Calu3 (cell line): ENCODE measurements at regions of chr3 and their contacts with region 1.

Region 1: GRCh38 chr3:23945903-23946751 is 1.0 kb downstream of the NR1D2 start:
- DNase-seq: peak; percentile 98
- H3K4me3 Mint-ChIP-seq: peak overlapping the region; percentile 70
- H3K27ac Mint-ChIP-seq: peak overlapping the region; percentile 89
- H3K4me1 Mint-ChIP-seq: peaks cover 47% of the 10 kb centered on the region
- H3K27me3 Mint-ChIP-seq: peaks cover 20% of the 10 kb centered on the region
- CTCF ChIP-seq: no peak

Region 2: GRCh38 chr3:23916886-23917678 is 29.0 kb before region 1 on chr3 and contains the starts of genes NKIRAS1 and RPL15:
- CTCF ChIA-PET with region 1: interaction called, 5 read pairs
- intact Hi-C with region 1: loop called (anchors 2 kb)
- DNase-seq: peak; percentile 97
- H3K4me3 Mint-ChIP-seq: peak within 1 kb of the TSS; percentile 68
- H3K27ac Mint-ChIP-seq: peak within 1 kb of the TSS; percentile 98
- H3K4me1 Mint-ChIP-seq: peaks cover 11% of the 10 kb centered on the region
- H3K27me3 Mint-ChIP-seq: no peaks in the 10 kb centered on the region
- CTCF ChIP-seq: peak; percentile 40
- total RNA-seq, gene NKIRAS1: 7.5 and 7.7 TPM in 2 replicates
- total RNA-seq, gene RPL15: 1,190 and 1,430 TPM in 2 replicates

Region 3: GRCh38 chr3:23926736-23927135 is 19.4 kb before region 1 on chr3:
- CTCF ChIA-PET with region 1: interaction called, 5 read pairs
- intact Hi-C with region 1: loop called (anchors 2 kb)
- DNase-seq: peak; percentile 23
- H3K4me3 Mint-ChIP-seq: no peak overlapping the region
- H3K27ac Mint-ChIP-seq: peak overlapping the region; percentile 70
- H3K4me1 Mint-ChIP-seq: peaks cover 7% of the 10 kb centered on the region
- H3K27me3 Mint-ChIP-seq: no peaks in the 10 kb centered on the region
- CTCF ChIP-seq: no peak

Region 4: GRCh38 chr3:23959135-23959900 is 13.2 kb after region 1 on chr3:
- CTCF ChIA-PET with region 1: interaction called, 3 read pairs
- intact Hi-C with region 1: loop called (anchors 1 kb)
- DNase-seq: peak; percentile 34
- H3K4me3 Mint-ChIP-seq: peak overlapping the region; percentile 35
- H3K27ac Mint-ChIP-seq: peak overlapping the region; percentile 91
- H3K4me1 Mint-ChIP-seq: peaks cover 12% of the 10 kb centered on the region
- H3K27me3 Mint-ChIP-seq: no peaks in the 10 kb centered on the region
- CTCF ChIP-seq: no peak